CD4-positive, alpha-beta memory T cell (primary cell): ENCODE measurements at regions of chr2 and their contacts with region 1.

Region 1: DNA sequence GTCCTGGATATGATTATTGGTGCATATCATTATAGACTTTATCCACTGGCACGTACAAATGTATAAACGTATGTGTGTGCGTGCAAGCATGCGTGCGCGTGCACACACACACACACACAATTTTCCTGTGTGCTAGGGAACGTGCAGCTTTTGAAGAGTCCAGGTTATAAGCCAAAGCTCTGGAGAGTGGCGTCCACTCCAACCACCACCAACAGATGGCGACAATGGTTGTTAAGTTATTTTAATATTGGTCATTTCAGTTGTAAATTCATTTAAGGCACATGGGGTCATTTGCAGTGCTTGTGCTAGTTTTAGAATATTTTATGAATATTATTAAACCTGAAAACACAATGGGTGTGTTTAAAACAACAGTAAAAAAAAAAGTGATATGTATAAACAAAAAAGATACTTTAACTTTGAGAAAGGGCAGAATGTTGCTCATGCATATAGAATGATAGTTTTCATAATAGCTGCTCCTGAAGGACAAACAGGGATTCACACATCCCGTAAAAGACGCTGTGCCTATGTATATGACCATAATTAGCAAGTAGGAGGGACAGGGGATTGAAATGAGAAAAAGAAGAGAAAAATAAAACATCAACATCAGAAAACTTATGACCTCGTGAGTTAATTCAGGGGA is 124.2 kb upstream of the ITGB6 start:
- DNase-seq: peak in 4 of 5 donors; percentile 21 to 36 (median 28)
- H3K4me3 ChIP-seq: no peak overlapping the region
- H3K4me3 Mint-ChIP-seq: peak overlapping the region in 3 of 8 donors; percentile 8 to 32 (median 18)
- H3K27ac ChIP-seq: no peak overlapping the region
- H3K27ac Mint-ChIP-seq: peak overlapping the region in 2 of 7 donors; percentile 33 to 51
- H3K4me1 ChIP-seq: peaks cover 66% of the 10 kb centered on the region
- H3K4me1 Mint-ChIP-seq: peaks cover 63 to 95% (median 82%) of the 10 kb centered on the region in 4 donors
- H3K27me3 ChIP-seq: no peaks in the 10 kb centered on the region
- H3K27me3 Mint-ChIP-seq: no peaks in the 10 kb centered on the region

Region 2: GRCh38 chr2:159867567-159868361 is 456.5 kb before region 1 on chr2:
- CTCF ChIA-PET with region 1: no interaction called
- POLR2A ChIA-PET with region 1: no interaction called
- intact Hi-C with region 1: no loop called
- DNase-seq: no peak
- H3K4me3 ChIP-seq: no peak overlapping the region
- H3K4me3 Mint-ChIP-seq: no peak overlapping the region
- H3K27ac ChIP-seq: no peak overlapping the region
- H3K27ac Mint-ChIP-seq: no peak overlapping the region
- H3K4me1 ChIP-seq: no peaks in the 10 kb centered on the region
- H3K4me1 Mint-ChIP-seq: no peaks in the 10 kb centered on the region
- H3K27me3 ChIP-seq: no peaks in the 10 kb centered on the region
- H3K27me3 Mint-ChIP-seq: no peaks in the 10 kb centered on the region

Region 3: GRCh38 chr2:160269803-160270570 is 54.3 kb before region 1 on chr2:
- CTCF ChIA-PET with region 1: interaction called, 16 read pairs
- POLR2A ChIA-PET with region 1: no interaction called
- intact Hi-C with region 1: no loop called
- DNase-seq: peak; percentile 64 to 75 (median 69)
- H3K4me3 ChIP-seq: peak overlapping the region; percentile 30 to 59
- H3K4me3 Mint-ChIP-seq: peak overlapping the region; percentile 81 to 90 (median 87)
- H3K27ac ChIP-seq: peak overlapping the region; percentile 64
- H3K27ac Mint-ChIP-seq: peak overlapping the region; percentile 91 to 97 (median 94)
- H3K4me1 ChIP-seq: peaks cover 29% of the 10 kb centered on the region
- H3K4me1 Mint-ChIP-seq: peaks cover 20 to 48% (median 32%) of the 10 kb centered on the region in 4 donors
- H3K27me3 ChIP-seq: no peaks in the 10 kb centered on the region
- H3K27me3 Mint-ChIP-seq: no peaks in the 10 kb centered on the region

Region 4: GRCh38 chr2:160353166-160353565 is 28.9 kb after region 1 on chr2:
- CTCF ChIA-PET with region 1: interaction called, 12 read pairs
- POLR2A ChIA-PET with region 1: no interaction called
- intact Hi-C with region 1: no loop called
- DNase-seq: peak in 4 of 5 donors; percentile 26 to 37 (median 32)
- H3K4me3 ChIP-seq: no peak overlapping the region
- H3K4me3 Mint-ChIP-seq: peak overlapping the region in 2 of 8 donors; percentile 4 to 45
- H3K27ac ChIP-seq: no peak overlapping the region
- H3K27ac Mint-ChIP-seq: peak overlapping the region in 2 of 7 donors; percentile 44 to 67
- H3K4me1 ChIP-seq: peaks cover 27% of the 10 kb centered on the region
- H3K4me1 Mint-ChIP-seq: peaks cover 50 to 87% (median 73%) of the 10 kb centered on the region in 4 donors
- H3K27me3 ChIP-seq: no peaks in the 10 kb centered on the region
- H3K27me3 Mint-ChIP-seq: no peaks in the 10 kb centered on the region

Region 5: GRCh38 chr2:160918906-160919503 is 594.7 kb after region 1 on chr2:
- CTCF ChIA-PET with region 1: interaction called, 10 read pairs
- POLR2A ChIA-PET with region 1: no interaction called
- intact Hi-C with region 1: loop called (anchors 1 kb)
- DNase-seq: peak in 3 of 5 donors; percentile 6 to 18 (median 13)
- H3K4me3 ChIP-seq: no peak overlapping the region
- H3K4me3 Mint-ChIP-seq: no peak overlapping the region
- H3K27ac ChIP-seq: no peak overlapping the region
- H3K27ac Mint-ChIP-seq: no peak overlapping the region
- H3K4me1 ChIP-seq: no peaks in the 10 kb centered on the region
- H3K4me1 Mint-ChIP-seq: no peaks in the 10 kb centered on the region
- H3K27me3 ChIP-seq: no peaks in the 10 kb centered on the region
- H3K27me3 Mint-ChIP-seq: no peaks in the 10 kb centered on the region